Posterior vena cava (tissue), 2 donors: ENCODE measurements at regions of chr7 and their contacts with region 1.

Region 1: GRCh38 chr7:84248267-84248666 is 53.7 kb upstream of the SEMA3A start:
- DNase-seq: no peak

Region 2: DNA sequence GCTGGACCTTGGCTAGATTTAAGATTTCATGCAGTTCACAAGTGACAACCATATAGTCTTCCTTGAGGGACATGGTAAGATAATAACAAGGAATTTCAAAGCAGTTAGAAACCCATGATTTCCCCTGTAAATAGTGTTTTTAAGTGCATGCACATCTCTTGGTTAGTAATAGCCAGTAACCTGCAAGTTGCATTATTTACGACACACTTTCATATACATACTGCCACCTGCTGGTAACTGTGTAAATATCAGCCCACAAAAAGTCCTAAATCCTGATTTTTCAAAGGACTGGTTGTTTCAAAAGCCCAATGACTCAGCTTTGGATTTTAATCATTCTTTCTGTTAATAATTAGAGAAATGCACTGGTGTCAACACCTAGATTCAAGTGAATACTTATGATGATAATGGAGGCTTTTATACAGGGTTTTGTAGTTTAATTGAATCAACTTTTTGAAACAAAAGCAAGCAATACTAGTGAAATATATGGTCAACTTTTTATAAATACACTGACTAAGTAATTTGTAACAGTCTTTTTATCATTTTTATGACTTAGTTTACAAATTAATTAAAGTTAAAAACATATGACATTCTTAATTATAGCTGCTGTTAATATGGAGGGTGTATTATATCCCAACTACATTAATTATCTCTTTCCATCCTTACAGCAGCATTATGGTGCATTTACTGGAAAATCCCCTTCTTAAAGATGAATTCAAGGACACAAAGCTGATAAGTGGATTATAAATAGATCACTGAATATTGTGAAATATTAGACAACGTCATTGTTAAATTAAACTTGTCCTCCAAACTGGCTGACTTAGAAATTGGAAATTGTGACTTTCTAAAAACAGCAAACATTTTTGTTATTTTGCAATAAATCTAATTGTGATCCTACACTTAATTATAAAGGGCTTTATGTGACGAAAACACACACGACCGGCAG is 1306.2 kb after region 1 on chr7:
- intact Hi-C with region 1: loop called in 1 of 2 experiments (anchors 10 kb)
- DNase-seq: no peak